Caki2 (cell line): ENCODE measurements at regions of chr15 and their contacts with region 1.

Region 1: GRCh38 chr15:69107026-69107620 is 53.3 kb upstream of the GLCE start:
- DNase-seq: no peak

Region 2: DNA sequence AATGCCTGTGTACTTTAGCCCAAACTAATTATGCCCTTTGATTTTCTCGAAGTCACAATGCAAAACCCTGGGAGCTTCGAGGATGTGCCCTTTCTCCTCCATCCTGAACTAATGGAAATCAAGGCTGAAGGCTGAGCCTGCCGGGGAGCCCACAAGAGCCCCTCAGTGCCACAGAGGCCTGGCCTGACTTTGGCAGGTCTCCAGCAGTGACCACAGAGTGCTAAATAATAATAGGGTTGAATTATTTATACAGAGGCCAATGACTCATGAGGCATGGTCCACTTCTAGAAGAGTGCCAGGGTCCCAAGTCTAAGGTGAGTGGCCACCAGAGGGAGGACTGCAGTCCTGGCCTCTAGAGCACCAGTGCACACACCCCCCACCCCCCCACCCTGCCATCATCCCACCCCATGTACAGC is 34.2 kb after region 1 on chr15:
- in situ Hi-C with region 1: loop called (anchors 5 kb)
- DNase-seq: peak; percentile 65

Region 3: DNA sequence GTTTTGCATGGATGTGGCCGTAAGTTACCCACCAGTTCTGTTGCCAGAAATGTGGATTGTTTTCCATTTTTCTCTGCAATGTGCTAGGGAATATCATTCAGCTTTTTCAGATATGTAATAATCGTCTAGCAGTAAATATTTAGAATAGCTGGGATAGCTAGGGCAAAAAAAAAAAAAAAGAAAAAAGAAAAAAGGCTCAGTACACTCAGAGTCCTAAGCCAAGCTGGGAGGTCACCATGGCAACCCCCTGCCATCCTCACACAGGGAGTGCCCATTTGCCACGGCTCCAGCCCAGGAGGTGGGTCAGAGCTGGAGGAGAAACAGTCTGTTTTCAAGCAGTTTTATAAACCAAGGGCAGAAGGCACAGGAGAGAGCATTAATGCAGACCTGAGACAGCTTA is 216.8 kb after region 1 on chr15:
- in situ Hi-C with region 1: no loop called
- DNase-seq: no peak